ENCODE measurements at regions of chr1 and their contacts with region 1.

Region 1: DNA sequence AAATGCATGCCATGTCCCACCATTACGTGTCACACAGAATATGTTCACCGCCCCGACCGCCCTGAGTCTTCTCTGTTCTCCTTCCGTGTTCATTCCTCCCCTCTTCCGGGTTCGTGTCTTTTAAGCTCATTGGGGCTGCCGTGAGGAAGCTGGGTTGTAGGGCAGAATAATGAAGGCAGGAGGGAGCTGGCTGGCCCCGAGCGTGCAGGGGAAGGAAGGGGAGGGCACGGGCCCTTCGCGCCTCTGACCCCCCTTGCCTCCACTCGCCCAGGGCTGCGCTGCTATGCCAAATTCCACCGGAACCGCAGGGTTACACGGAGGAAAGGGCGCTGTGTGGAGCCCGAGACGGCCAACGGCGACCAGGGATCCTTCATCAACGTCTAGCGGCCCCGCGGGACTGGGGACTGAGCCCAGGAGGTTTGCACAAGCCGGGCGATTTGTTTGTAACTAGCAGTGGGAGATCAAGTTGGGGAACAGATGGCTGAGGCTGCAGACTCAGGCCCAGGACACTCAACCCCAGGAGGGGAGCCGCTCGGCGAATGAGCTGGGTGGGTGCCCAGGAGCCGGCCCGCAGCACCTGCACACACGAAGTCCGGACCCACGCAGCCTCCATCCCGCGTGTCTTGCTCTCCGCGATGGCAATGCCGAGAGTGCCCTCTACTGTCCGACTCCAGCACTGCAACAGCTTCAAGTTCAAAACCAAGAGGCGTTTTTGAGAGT is 16.5 kb upstream of the AGTRAP start:
- DNase-seq: peak; percentile 70 to 81
- H3K4me3 ChIP-seq: peak overlapping the region; percentile 34 to 69 (median 51)
- H3K27ac ChIP-seq: peak overlapping the region; percentile 50 to 74
- H3K4me1 ChIP-seq: peaks cover 0 to 4% of the 10 kb centered on the region in 2 donors
- H3K27me3 ChIP-seq: no peaks in the 10 kb centered on the region
- CTCF ChIP-seq: peak; percentile 39 to 95 (median 91)
- POLR2A ChIP-seq: no peak

Region 2: GRCh38 chr1:11671544-11672286 is 47.8 kb before region 1 on chr1:
- intact Hi-C with region 1: loop called (anchors 10 kb)
- DNase-seq: no peak
- H3K4me3 ChIP-seq: no peak overlapping the region
- H3K27ac ChIP-seq: no peak overlapping the region
- H3K4me1 ChIP-seq: no peaks in the 10 kb centered on the region
- H3K27me3 ChIP-seq: no peaks in the 10 kb centered on the region
- CTCF ChIP-seq: no peak
- POLR2A ChIP-seq: no peak